GM23248 (cell line): ENCODE measurements at regions of chr9 and their contacts with region 1.

Region 1: DNA sequence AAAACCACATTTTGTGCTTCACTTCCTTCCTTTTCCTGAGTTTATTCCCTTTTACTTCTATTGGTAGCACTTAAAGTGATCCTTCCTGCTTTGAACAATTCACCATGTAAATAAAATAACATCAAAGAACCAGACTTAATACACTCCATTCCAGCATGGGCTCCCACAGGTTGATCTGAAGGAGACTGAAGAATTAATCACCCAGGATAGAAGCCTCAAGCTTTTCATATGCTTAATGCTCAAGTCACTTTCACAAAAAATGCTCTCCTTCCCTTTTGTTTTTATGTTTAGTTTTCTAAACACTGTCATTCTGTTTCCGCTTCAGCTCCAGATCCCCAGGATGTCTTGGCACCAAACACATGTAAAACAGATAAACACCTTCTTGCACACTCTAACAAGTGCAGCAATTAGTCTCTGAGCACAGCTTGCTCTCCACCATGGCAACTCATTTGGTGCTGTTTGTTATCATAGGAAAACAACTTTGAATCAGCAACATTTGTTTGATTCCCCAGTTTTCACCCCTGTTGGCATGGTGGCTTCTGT is 37.0 kb downstream of the DMRTA1 start:
- DNase-seq: no peak
- H3K4me3 ChIP-seq: no peak overlapping the region
- H3K27ac ChIP-seq: no peak overlapping the region
- H3K4me1 ChIP-seq: no peaks in the 10 kb centered on the region
- H3K27me3 ChIP-seq: 0 out of 2 replicates have a peak, but pooled peaks cover 3% of the 10 kb centered on the region

Region 2: DNA sequence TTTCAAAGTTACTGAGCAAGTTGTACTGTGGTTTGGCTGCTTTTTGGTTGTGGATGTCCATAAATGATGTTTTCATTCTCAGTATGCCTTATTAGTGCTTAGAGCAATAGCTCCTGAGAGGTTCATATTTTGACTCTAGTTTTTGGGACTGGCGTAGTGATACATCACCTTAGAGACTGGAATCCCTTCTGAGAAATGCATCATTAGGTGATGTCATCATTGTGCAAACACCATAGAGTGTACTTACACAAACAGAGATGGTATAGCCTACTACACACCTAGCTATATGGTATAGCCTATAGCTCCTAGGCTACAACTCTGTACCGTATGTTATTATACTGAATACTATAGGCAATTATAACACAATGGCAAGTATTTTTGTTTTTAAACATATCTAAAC is 56.3 kb after region 1 on chr9:
- in situ Hi-C with region 1: loop called (anchors 10 kb)
- DNase-seq: no peak
- H3K4me3 ChIP-seq: no peak overlapping the region
- H3K27ac ChIP-seq: no peak overlapping the region
- H3K4me1 ChIP-seq: no peaks in the 10 kb centered on the region
- H3K27me3 ChIP-seq: no peaks in the 10 kb centered on the region